Aorta (tissue), 5 donors: ENCODE measurements at regions of chr2 and their contacts with region 1.

Region 1: DNA sequence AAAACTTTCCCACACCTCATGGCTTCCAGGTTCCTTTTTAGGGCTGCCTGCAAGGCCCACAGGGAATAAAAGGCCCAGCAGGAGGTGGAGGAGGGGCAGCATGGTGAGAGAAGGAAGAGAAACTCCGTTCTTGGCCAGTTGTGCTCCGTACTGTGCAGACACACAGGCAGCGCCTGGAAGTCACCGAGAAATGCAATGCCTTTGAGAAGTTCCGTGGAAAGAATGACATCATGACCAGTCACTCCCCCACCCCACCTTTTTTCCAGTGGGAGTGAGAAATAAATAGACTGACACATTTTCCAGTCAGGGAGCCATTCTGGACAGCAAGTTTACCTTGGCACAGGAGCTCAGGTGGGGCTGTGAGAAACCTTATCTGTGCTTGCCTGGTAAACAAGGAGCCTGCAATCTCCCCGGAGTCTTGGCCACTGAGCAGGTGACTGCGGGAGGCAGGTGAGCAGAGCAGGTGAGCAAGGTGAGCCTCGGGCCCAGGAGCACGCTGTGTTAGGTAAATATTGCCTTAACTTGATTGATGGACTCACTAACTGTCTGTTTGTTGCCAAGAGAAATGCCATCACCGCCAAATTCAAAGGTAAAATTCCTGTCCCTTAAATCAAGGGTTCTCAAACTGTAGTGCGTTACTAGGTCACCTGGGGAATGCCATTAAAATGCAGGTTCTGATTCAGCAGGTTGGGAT is 13.5 kb upstream of the LBH start:
- DNase-seq: peak; percentile 80 to 89
- ATAC-seq: peak; percentile 80
- H3K4me3 ChIP-seq: no peak overlapping the region
- H3K27ac ChIP-seq: peak overlapping the region; percentile 10 to 90
- H3K4me1 ChIP-seq: peaks cover 0 to 3% of the 10 kb centered on the region in 2 donors
- H3K27me3 ChIP-seq: no peaks in the 10 kb centered on the region

Region 2: DNA sequence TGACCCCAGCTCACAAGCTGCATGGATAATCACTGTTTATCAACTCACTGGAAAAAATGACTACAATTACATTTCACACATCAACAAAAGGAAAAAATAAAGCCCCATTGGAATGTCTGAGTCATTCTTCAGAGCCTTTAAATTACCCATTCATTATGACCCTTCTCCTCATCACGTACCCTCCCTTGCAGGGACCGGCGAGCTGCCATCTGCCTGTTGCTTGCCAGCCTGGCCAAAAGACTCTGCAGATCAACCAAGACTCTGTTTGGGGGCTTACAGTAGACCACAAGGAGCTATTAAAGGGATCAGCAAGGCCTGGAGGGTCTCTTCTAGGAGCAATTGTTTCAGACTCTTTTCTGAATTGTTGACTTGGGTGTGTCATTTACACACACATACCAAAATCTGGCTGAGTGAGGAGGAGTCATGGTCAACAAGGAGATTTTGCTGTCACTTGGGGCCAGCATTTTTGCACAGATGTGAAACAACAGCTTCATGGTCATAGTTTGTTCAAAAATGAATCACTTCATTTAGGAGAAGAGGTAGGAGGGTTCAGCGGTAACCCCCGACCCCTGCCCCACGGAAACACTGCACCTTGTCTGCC is 55.6 kb after region 1 on chr2:
- intact Hi-C with region 1: no loop called
- DNase-seq: peak in 1 of 2 donors; percentile 60
- ATAC-seq: no peak
- H3K4me3 ChIP-seq: no peak overlapping the region
- H3K27ac ChIP-seq: peak overlapping the region in 1 of 2 donors; percentile 26
- H3K4me1 ChIP-seq: no peaks in the 10 kb centered on the region
- H3K27me3 ChIP-seq: no peaks in the 10 kb centered on the region

Region 3: GRCh38 chr2:30565851-30566358 is 348.1 kb after region 1 on chr2:
- intact Hi-C with region 1: loop called in 1 of 2 experiments (anchors 10 kb)
- DNase-seq: no peak
- ATAC-seq: peak; percentile 38
- H3K4me3 ChIP-seq: no peak overlapping the region
- H3K27ac ChIP-seq: peak overlapping the region; percentile 57 to 95
- H3K4me1 ChIP-seq: no peaks in the 10 kb centered on the region
- H3K27me3 ChIP-seq: no peaks in the 10 kb centered on the region

Region 4: DNA sequence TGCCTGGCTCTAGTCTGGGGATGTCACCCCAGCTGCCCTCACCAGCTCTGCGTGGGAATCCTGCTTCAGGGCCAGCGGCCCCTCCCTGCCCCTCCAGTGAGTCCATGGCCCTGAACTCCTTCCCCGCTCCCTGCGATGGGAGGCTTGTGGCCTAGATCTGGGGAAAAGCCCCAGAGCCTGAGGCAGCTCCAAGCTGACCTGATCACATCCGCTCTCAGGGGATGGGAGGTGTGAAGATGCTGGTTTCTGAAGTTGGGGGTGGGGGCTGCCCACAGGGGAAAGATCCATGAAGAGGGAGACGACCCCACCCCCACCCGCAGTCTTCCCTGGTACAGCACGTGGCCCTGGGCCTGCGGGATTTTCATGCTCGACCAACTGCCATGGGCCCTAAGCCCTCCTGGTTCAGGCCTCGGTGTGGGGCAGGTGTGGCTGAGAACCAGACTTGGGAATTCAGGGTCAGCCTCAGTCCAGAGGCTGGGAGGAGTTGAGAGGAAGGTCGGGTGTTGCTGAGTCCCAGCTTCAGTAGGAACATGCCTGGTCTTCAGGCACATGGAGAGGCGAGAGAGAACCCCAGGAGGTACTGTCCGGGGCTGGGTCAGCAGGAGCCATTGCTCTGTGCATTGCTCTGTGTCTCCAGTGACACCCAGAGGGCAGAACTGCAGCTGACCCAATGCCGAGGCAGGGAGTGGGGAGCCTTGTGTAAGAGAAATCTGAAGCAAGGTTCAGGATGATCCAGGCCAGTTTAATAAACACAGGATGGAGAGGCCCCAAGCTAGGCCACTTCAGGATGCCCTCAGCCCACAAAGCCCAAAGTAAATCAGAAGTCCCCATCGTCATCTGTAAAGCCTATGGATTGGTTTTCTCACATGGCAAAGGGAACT is 474.4 kb after region 1 on chr2:
- intact Hi-C with region 1: loop called in 1 of 2 experiments (anchors 5 kb)
- DNase-seq: no peak
- ATAC-seq: no peak
- H3K4me3 ChIP-seq: no peak overlapping the region
- H3K27ac ChIP-seq: peak overlapping the region; percentile 31 to 79
- H3K4me1 ChIP-seq: peaks cover 0 to 6% of the 10 kb centered on the region in 2 donors
- H3K27me3 ChIP-seq: no peaks in the 10 kb centered on the region